ENCODE measurements at regions of chr17 and their contacts with region 1.

Region 1: GRCh38 chr17:79777894-79778503 is at the start of gene CBX2:
- DNase-seq: peak; percentile 81 to 92 (median 85)
- ATAC-seq: peak in 3 of 4 donors; percentile 70 to 81 (median 80)
- H3K4me3 ChIP-seq: peak within 1 kb of the TSS; percentile 53 to 96 (median 76)
- H3K27ac ChIP-seq: peak within 1 kb of the TSS; percentile 55 to 84 (median 77)
- H3K4me1 ChIP-seq: peaks cover 0 to 38% (median 17%) of the 10 kb centered on the region in 12 donors
- H3K27me3 ChIP-seq: peaks cover 0 to 65% (median 5%) of the 10 kb centered on the region in 9 donors
- CTCF ChIP-seq: peak in 1 of 12 donors; percentile 4
- POLR2A ChIP-seq: peak in 1 of 2 donors; percentile 27
- total RNA-seq, gene CBX2: 2.4 to 4.3 (median 3.2) TPM

Region 2: DNA sequence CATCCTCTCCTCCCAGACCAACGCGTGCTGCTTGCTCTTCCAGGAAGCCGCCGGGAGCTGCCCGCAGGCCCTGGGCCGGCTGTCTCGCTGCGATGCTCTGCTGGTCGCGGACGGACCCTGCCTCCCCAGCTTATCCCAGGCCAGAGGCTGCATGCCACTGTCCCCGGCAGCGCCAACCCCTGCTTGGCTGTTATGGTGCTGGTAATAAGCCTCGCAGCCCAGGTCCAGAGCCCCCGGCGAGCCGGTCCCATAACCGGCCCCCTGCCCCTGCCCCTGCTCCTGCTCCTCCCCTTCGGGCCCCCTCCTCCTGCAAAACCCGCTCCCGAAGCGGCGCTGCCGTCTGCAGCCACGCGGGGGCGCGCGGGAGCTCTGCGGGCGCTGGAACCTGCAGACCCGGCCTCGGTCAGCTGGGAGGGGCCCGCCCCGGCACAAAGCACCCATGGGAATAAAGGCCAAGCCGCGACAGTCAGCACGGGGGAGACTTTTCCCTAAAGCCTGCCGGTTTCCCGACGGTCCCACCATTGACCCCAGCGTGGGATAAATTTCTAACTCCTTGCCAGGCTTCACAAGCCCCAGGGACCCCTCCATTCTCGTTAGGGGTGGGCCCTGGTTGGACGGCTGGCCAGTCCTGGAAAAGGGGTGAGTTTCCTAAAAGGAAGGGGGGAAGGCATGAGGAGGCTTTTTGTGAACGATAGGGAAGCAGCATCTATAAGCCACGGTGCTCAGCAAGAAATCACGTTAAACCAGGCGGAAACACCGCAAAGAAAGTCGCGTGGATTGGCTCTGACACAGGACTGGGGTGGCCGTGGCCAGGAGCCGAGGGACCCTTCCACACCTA is 36.0 kb before region 1 on chr17:
- intact Hi-C with region 1: loop called in 3 of 10 experiments (anchors 2 to 5 kb)
- DNase-seq: peak; percentile 62 to 88 (median 69)
- ATAC-seq: peak in 3 of 4 donors; percentile 65 to 77 (median 70)
- H3K4me3 ChIP-seq: peak overlapping the region in 4 of 12 donors; percentile 21 to 32 (median 24)
- H3K27ac ChIP-seq: no peak overlapping the region
- H3K4me1 ChIP-seq: peaks cover 0 to 18% (median 7%) of the 10 kb centered on the region in 12 donors
- H3K27me3 ChIP-seq: peaks cover 16 to 71% (median 52%) of the 10 kb centered on the region in 9 donors
- CTCF ChIP-seq: peak; percentile 85 to 97 (median 93)
- POLR2A ChIP-seq: no peak

Region 3: DNA sequence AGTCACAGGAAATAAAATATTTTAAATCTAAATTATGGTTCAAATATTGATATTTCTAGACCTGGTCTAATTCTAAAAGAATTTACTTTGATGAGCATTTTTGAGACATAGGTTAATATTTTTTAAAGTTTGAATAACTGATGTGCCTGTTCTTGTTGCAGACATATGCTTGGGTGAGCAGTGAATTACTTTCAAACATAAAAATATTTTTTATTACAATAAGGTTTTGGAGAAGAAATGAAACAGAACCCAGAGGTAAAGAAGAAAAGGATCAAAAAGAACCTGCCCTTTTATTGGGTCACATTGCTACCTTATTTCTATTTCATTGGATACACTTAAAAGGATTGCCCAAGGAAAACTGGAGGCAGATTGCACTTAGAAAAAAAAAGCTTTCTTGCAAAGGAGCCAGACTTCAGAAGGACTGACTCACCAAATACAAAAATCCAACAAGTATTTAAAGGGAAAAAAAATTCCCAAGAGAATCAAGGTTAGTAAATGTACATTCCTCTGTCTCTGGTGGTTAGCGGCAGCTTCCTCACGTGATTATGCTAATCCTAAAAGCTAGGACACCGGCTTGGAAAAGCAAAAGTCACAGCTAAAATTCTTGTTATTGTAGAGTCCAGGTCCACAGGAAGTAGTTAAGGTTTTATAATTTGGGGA is 28.7 kb before region 1 on chr17:
- intact Hi-C with region 1: loop called in 3 of 10 experiments (anchors 2 to 5 kb)
- DNase-seq: no peak
- ATAC-seq: no peak
- H3K4me3 ChIP-seq: no peak overlapping the region
- H3K27ac ChIP-seq: no peak overlapping the region
- H3K4me1 ChIP-seq: peaks cover 0 to 21% (median 5%) of the 10 kb centered on the region in 12 donors
- H3K27me3 ChIP-seq: peaks cover 27 to 88% (median 72%) of the 10 kb centered on the region in 9 donors
- CTCF ChIP-seq: no peak
- POLR2A ChIP-seq: no peak

Measured in heart left ventricle (tissue), 16 donors.